Heart right ventricle (tissue), 16 donors: ENCODE measurements at regions of chr14 and their contacts with region 1.

Region 1: DNA sequence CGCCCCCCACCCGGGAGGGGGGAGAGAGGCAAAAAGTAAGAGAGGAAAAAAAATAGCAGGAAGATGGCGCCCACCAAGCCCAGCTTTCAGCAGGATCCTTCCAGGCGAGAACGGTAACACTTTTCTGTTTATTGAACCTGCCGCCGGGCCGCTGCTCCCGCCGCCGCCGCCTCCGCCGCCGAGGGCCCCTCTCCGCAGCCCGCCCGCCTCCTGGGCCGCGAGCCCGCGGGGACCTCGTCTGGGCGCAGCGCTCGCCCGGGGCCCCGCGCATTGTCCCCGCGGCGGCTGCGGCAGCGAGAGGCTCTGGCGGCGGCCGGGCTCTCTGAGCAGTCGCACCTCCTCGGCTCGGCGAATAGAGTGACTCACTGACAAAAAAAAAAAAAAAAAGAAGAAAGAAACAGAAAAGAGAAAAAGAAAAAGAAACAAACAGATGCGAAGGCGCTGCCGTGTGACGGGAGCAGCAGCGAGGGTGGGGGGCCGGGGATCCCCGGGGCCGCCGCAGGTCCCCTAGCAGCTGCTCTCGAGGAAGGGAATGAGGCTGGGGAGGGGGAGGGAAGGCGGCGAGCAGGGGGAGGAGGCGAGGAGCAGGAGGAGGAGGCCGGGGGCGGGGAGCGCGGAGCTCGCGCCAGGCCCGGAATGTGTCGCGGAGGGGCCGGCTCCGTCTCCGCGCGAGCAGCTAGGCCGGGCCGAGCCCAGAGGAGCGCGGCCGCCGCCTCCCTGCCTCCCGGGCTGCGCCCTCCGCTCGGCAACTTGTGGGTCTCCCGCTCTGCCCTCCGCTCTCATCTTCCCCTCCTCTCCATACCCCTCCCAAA is 781 bp downstream of the NPAS3 start:
- DNase-seq: peak; percentile 82
- ATAC-seq: peak; percentile 92 to 95 (median 94)
- H3K4me3 ChIP-seq: peak overlapping the region; percentile 18 to 72 (median 58)
- H3K27ac ChIP-seq: peak overlapping the region; percentile 50 to 86 (median 80)
- H3K4me1 ChIP-seq: peaks cover 0 to 28% (median 12%) of the 10 kb centered on the region in 9 donors
- H3K27me3 ChIP-seq: peaks cover 0 to 66% (median 33%) of the 10 kb centered on the region in 7 donors
- CTCF ChIP-seq: no peak

Region 2: DNA sequence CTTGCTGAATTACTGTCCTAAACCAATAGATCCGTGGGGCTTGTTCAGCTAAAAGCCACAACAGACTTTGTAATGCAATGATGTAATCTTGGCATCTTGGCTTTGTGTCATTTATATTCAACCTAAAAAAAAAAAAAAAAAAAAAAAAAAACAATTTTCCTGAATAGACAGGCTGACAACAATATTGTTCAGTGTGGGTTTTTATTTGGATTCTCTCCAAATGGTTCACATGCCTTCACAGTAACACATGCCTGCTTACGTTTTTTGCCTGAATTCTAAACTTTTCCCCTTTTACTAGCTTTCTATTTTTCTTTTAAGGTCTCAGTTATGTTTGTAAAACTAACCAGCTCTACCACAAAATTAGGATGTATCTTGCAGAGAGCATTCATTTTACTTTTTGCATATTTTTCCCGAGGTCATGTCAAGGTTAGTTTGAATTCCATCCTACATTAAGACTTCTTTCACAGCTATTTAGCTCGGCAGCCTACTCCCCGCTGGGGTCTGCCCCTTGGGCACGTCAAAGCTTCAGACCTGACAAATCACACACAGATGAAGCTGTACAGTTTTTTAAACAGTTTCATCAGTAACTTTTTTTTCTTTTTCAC is 214.5 kb before region 1 on chr14:
- intact Hi-C with region 1: loop called in 1 of 10 experiments (anchors 10 kb)
- DNase-seq: no peak
- ATAC-seq: peak in 4 of 8 donors; percentile 24 to 46 (median 32)
- H3K4me3 ChIP-seq: peak overlapping the region in 6 of 10 donors; percentile 1 to 29 (median 18)
- H3K27ac ChIP-seq: peak overlapping the region in 5 of 10 donors; percentile 21 to 52 (median 27)
- H3K4me1 ChIP-seq: peaks cover 0 to 44% (median 27%) of the 10 kb centered on the region in 9 donors
- H3K27me3 ChIP-seq: no peaks in the 10 kb centered on the region
- CTCF ChIP-seq: no peak

Region 3: DNA sequence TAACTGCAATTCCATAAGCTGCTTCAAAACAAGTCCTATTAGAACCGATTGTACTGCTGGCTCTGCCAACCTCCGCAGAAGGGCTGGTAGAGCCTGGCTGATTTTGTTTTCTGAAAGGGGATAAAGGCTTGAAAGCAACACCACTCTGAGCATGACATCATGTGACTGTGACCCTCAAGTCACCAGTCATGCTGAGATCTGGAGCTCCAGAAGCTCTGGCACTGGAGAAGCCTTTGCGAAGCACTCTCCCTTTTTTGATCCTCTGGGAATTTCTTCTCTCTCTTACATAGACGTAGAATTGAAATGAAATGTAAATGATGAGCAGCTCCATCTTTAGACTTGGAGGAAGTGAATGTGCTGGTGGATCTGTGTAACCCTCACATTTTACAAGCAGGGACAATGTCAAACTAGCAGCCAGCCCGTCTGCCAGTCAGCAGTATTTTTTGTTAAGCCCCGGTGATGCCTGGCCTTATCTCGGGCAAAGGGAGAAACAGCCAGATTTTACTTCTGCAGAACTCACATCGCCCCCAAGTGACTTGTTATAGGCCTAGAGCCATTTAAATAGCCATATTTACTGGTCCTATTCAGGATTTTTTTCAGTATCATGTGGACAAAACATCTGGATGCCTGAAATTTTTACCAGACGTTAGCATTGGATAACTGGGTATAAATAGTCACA is 112.9 kb before region 1 on chr14:
- intact Hi-C with region 1: loop called in 1 of 10 experiments (anchors 10 kb)
- DNase-seq: peak in 1 of 2 donors; percentile 29
- ATAC-seq: peak; percentile 31 to 79 (median 73)
- H3K4me3 ChIP-seq: no peak overlapping the region
- H3K27ac ChIP-seq: peak overlapping the region in 6 of 10 donors; percentile 18 to 68 (median 28)
- H3K4me1 ChIP-seq: peaks cover 0 to 67% (median 29%) of the 10 kb centered on the region in 9 donors
- H3K27me3 ChIP-seq: no peaks in the 10 kb centered on the region
- CTCF ChIP-seq: peak in 5 of 9 donors; percentile 18 to 45 (median 43)

Region 4: GRCh38 chr14:32986791-32987540 is 47.5 kb after region 1 on chr14:
- intact Hi-C with region 1: loop called in 1 of 10 experiments (anchors 5 kb)
- DNase-seq: peak in 1 of 2 donors; percentile 16
- ATAC-seq: peak in 5 of 8 donors; percentile 42 to 74 (median 61)
- H3K4me3 ChIP-seq: no peak overlapping the region
- H3K27ac ChIP-seq: peak overlapping the region in 6 of 10 donors; percentile 5 to 56 (median 36)
- H3K4me1 ChIP-seq: no peaks in the 10 kb centered on the region
- H3K27me3 ChIP-seq: no peaks in the 10 kb centered on the region
- CTCF ChIP-seq: no peak

Region 5: DNA sequence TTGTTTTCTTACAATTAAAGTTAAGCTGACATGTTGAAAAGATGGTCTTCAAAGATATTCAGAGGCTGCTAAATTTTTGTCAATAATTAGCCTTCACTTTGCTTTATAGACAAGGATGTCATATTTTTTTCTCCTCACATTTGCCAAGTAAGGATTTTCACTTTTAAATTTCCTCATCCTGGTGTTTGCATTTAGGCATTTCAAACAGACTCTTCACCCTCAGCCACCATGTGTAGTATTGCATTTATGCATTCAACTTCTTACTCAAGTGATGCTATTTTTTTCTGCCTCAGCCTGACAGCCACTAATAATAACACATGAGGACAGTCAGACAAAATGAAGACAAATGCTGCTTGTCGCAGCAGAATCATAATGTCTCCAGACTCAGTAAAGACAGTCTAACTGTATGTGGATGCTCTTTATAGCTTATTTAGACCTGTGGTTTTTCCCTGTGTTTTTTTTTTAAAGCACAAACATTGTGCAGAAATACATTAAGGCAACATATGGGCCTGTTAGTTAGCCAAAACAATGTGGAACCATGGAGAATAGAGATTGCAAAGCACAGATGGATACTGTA is 480.7 kb after region 1 on chr14:
- intact Hi-C with region 1: loop called in 1 of 10 experiments (anchors 10 kb)
- DNase-seq: no peak
- ATAC-seq: peak in 1 of 8 donors; percentile 30
- H3K4me3 ChIP-seq: no peak overlapping the region
- H3K27ac ChIP-seq: no peak overlapping the region
- H3K4me1 ChIP-seq: no peaks in the 10 kb centered on the region
- H3K27me3 ChIP-seq: no peaks in the 10 kb centered on the region
- CTCF ChIP-seq: no peak